Psoas muscle (tissue), 8 donors: ENCODE measurements at regions of chr16 and their contacts with region 1.

Region 1: GRCh38 chr16:21599233-21600030 is at the start of gene METTL9:
- DNase-seq: peak; percentile 93 to 97
- ATAC-seq: peak; percentile 98
- H3K4me3 ChIP-seq: peak within 1 kb of the TSS; percentile 92
- H3K27ac ChIP-seq: peak within 1 kb of the TSS; percentile 91
- H3K4me1 ChIP-seq: peaks cover 44% of the 10 kb centered on the region
- H3K27me3 ChIP-seq: no peaks in the 10 kb centered on the region
- CTCF ChIP-seq: no peak
- total RNA-seq, gene METTL9: 55.0 to 76.9 (median 71.1) TPM

Region 2: DNA sequence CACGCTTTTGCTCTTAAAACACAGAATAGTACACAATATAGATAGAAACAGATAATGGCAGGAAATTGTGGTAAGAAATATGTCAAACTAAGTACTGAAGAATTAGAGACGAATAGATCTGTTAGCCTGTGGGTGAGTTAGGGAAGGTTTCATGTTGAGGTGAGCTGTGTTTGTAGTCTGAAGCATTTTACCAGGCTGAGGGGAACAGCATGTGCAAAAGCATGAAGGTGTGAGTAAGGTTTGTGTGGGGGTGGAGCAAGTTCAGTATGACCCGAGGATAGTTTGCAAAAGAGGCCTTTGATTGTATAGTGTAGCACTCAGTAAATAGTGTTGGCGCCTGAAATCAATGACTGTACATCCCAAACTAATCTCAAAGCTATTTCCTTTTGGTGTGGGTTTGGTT is 39.1 kb after region 1 on chr16:
- intact Hi-C with region 1: loop called (anchors 5 kb)
- DNase-seq: no peak
- ATAC-seq: no peak
- H3K4me3 ChIP-seq: no peak overlapping the region
- H3K27ac ChIP-seq: no peak overlapping the region
- H3K4me1 ChIP-seq: no peaks in the 10 kb centered on the region
- H3K27me3 ChIP-seq: no peaks in the 10 kb centered on the region
- CTCF ChIP-seq: no peak

Region 3: DNA sequence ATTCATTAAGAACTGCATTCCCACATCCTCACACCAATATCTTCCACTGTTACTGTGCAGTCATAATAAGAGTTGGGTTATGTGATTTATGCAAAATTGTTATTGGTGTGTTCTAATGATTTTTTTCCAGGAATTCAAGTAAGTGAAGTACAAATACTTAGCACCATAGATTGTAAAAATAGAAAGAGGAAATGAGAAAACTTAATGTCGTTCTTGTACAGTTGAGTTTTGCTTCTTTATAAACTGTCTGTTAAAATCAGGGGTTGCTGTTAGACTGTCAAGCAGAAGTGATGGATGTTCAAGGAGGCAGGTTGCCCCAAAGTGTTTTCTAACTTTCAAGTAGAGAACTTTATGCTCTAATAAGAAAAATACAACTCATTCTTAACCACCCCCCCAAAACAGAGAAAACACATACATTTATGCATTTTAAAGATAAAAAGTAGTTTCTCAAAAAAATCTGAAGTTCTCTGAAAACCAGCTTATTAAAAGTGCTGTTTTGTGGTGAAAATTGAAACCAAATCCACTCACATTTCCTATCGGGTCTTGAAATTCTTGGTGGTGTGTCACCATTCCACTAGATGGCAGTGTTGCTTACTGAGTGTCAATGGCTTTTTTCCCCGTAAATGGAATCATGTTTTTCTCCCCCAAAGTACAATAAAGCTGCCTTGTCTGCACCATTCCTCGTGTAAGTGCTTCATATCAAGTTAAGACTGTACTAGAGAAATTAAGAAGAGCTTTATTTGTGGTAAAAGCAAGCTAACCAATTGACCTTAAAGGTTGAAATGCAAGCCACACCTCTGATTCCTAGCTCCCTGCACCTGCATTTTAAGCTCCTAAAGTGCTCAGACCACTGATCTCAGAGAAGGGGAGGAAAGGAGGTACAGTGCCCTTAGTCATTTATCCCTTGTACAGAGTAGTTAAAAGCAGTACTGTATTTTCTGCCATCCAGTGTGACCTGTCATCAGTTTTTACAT is 57.6 kb after region 1 on chr16:
- intact Hi-C with region 1: no loop called
- DNase-seq: no peak
- ATAC-seq: peak in 2 of 4 donors; percentile 45 to 49
- H3K4me3 ChIP-seq: no peak overlapping the region
- H3K27ac ChIP-seq: no peak overlapping the region
- H3K4me1 ChIP-seq: peaks cover 3% of the 10 kb centered on the region
- H3K27me3 ChIP-seq: no peaks in the 10 kb centered on the region
- CTCF ChIP-seq: peak; percentile 77

Region 4: GRCh38 chr16:21673469-21673868 is 74.0 kb after region 1 on chr16:
- intact Hi-C with region 1: no loop called
- DNase-seq: no peak
- ATAC-seq: no peak
- H3K4me3 ChIP-seq: no peak overlapping the region
- H3K27ac ChIP-seq: no peak overlapping the region
- H3K4me1 ChIP-seq: no peaks in the 10 kb centered on the region
- H3K27me3 ChIP-seq: peaks cover 0 to 9% (median 3%) of the 10 kb centered on the region in 3 donors
- CTCF ChIP-seq: no peak